Activated naive CD8-positive, alpha-beta T cell treated with anti-CD3 and anti-CD28 coated beads, Interleukin-2, amount 10 ng/mL, durations not matched to agents 7 days and 5 days (primary cell): ENCODE measurements at regions of chr17 and their contacts with region 1.

Region 1: DNA sequence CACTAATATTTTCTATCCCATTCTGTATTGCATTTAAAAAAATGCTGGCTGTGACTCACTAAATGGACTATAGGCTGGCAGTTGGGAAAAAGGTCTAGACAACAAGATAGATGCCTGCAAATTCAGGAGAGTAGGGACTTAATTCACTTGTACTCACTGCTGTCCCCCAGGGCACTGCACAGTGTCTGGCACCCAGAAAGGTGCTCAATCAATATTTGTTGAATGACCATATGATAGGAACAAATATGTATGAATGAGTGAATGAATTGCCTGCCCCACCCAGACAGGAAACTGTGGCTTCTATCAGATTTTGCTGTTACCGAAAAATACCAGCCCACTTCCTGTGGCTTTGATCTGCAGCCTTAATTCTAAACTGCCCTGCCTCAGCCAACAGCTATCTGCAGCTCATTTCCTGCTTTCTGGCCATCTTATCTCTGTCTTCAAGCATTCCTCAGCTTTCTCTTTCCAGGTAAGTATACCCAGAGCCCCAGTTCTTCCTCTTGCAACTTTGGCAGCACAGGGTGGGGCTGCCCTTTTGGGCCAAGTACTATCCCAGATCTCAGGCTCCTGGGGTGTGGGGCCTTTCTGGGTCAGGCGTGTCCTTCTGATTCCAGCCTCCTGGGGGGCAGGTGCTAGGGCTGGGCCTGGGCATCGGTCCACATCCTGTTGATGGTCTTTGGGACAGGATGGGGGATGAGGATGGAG is 15.3 kb upstream of the TNS4 start:
- DNase-seq: peak; percentile 66
- ATAC-seq: peak; percentile 82
- H3K4me3 Mint-ChIP-seq: peak overlapping the region; percentile 78
- H3K27ac Mint-ChIP-seq: peak overlapping the region; percentile 91
- H3K4me1 Mint-ChIP-seq: peaks cover 56% of the 10 kb centered on the region
- H3K27me3 Mint-ChIP-seq: peaks cover 2% of the 10 kb centered on the region

Region 2: DNA sequence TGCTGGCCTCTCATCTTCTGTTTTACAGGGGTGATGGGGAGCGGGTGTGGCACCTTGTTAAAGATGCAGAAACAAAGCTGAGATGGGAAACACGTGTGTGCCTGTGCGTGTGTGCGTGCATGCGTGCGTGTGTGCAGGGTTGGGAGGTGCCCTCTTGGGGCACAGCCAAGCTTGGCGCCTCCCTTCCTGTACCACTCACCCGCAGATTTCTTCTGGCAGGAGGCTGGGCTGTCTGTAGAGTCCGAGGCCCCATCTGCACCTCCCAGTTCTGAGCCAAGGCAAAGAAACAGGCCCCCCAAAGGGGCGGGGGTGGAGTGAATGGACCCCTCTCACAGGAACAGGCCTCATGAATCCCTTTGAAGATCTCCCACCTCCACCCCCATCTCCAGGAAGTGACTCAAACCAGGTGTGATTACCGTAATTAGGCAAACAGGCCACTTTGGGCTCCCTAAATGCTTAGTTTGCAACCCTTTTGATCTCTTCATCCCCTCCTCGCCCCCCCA is 36.2 kb before region 1 on chr17:
- POLR2A ChIA-PET with region 1: interaction called, 10 read pairs
- DNase-seq: peak; percentile 81
- ATAC-seq: peak; percentile 89
- H3K4me3 Mint-ChIP-seq: peak overlapping the region; percentile 75
- H3K27ac Mint-ChIP-seq: peak overlapping the region; percentile 97
- H3K4me1 Mint-ChIP-seq: peaks cover 66% of the 10 kb centered on the region
- H3K27me3 Mint-ChIP-seq: no peaks in the 10 kb centered on the region

Region 3: DNA sequence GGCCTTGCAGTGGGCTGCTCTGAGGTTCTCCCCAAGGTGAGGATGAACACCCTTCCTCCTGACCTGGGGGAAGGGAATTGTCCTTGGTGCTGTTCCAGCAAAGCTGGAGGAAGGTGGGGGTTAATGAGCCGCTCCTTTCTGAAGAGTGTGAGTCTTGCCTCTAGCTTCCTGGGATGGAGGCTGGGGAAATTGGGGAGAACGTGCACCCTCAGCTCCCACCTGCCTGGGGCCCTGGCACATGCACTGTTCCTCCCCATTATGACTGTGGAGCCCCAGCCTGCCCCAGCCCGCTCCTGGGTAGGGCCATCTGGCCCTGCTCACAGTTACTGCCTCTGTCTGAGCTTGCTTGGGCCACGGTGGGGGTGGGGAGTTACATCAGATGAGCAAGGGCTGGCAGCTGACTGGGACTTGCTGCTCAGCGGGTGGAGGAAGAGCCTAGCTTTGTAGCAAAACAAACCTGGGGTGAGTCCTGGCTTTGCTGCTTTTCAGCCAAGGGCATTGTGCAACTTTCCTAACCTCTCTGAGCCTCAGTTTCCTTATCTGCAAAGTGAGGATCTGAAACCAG is 26.4 kb before region 1 on chr17:
- POLR2A ChIA-PET with region 1: interaction called, 23 read pairs
- DNase-seq: no peak
- ATAC-seq: peak; percentile 58
- H3K4me3 Mint-ChIP-seq: peak overlapping the region; percentile 32
- H3K27ac Mint-ChIP-seq: peak overlapping the region; percentile 83
- H3K4me1 Mint-ChIP-seq: peaks cover 42% of the 10 kb centered on the region
- H3K27me3 Mint-ChIP-seq: no peaks in the 10 kb centered on the region

Region 4: DNA sequence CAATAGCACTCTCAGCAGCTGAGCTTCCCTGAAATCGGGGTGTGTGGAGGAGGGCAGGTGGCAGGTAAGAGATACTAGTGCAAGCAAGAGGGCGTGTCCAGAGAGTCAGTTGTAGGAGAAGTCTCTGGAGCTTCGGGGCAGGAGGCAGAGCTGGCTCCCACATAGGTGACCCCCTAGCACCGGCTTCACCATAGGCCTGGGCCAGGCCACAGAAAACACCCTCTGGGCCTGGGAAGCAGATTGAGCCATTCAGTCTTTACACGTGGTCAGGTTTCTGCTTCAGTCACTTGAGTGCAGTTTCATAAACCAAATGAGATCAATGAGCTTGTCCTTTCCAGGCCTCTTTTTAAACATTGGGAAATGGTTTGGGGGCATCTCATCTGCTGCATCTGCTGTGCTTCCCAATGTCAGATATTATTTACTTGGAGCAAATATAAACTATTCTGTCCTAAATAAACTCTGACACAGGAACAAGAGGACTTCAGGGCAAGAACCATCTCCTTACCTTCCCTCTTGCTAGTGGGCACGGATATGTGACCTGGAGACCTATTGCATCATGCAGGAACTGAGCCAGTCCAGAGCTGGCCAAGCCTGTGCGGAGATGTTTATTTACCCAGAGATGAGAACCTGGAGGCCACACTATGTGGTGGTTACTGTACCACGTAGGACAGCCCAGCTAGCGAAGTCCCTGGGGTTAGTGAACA is 32.4 kb after region 1 on chr17:
- POLR2A ChIA-PET with region 1: interaction called, 10 read pairs
- DNase-seq: peak; percentile 36
- ATAC-seq: no peak
- H3K4me3 Mint-ChIP-seq: peak overlapping the region; percentile 53
- H3K27ac Mint-ChIP-seq: peak overlapping the region; percentile 83
- H3K4me1 Mint-ChIP-seq: peaks cover 80% of the 10 kb centered on the region
- H3K27me3 Mint-ChIP-seq: no peaks in the 10 kb centered on the region

Region 5: GRCh38 chr17:40622509-40622928 is 105.8 kb after region 1 on chr17:
- POLR2A ChIA-PET with region 1: no interaction called
- DNase-seq: no peak
- ATAC-seq: peak; percentile 77
- H3K4me3 Mint-ChIP-seq: peak overlapping the region; percentile 58
- H3K27ac Mint-ChIP-seq: peak overlapping the region; percentile 72
- H3K4me1 Mint-ChIP-seq: peaks cover 47% of the 10 kb centered on the region
- H3K27me3 Mint-ChIP-seq: no peaks in the 10 kb centered on the region